ENCODE measurements at regions of chr6 and their contacts with region 1.

Region 1: GRCh38 chr6:5712349-5713215 is 294.1 kb downstream of the NRN1 start:
- DNase-seq: no peak
- ATAC-seq: no peak
- H3K4me3 ChIP-seq: no peak overlapping the region
- H3K27ac ChIP-seq: no peak overlapping the region
- H3K4me1 ChIP-seq: peaks cover 0 to 2% of the 10 kb centered on the region in 2 experiments; a peak in 1 of 5 replicates
- H3K27me3 ChIP-seq: 0 out of 5 replicates have a peak, but pooled peaks cover 0 to 4% of the 10 kb centered on the region in 2 experiments
- CTCF ChIP-seq: no peak
- EP300 ChIP-seq: no peak
- POLR2A ChIP-seq: no peak
- RAD21 ChIP-seq: no peak

Region 2: DNA sequence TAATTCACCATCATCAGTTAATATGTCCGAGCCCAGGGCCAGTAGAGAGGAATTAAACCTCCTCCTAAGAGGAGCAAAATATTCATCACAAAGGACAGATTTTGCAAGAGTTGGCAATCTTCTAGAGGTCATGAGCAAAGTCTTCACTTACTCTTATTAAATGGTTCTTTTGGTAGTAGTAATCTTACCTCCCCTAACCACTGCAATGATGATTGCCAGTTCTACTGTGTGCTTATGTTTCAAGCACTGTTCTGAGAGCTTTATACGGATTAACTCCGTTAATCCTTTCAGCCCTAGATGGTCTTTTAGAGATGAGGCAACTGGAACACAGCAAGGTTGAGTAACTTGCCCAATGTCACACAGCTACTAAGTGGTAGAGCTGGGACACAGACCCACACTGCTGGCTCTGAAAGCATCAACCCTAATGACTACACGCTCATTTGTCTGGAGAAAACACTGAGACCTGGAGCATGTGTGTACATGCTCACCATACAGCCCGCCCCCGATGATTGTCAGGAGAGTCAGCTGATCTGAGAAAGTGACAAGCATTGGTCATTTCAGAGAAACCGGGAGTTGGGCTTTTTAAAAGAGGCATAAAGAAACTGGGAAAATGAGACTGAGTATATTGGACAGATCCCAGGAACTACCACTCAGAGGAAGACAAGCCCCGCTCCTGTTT is 18.1 kb after region 1 on chr6:
- CTCF ChIA-PET with region 1: no interaction called
- POLR2A ChIA-PET with region 1: interaction called, 3 read pairs
- in situ Hi-C with region 1: no loop called
- intact Hi-C with region 1: loop called (anchors 1 kb)
- DNase-seq: no peak
- ATAC-seq: 0 out of 3 replicates have a peak, but pooled peaks have one; percentile 45
- H3K4me3 ChIP-seq: no peak overlapping the region
- H3K27ac ChIP-seq: no peak overlapping the region
- H3K4me1 ChIP-seq: no peaks in the 10 kb centered on the region
- H3K27me3 ChIP-seq: peaks cover 12 to 50% of the 10 kb centered on the region in 2 experiments
- CTCF ChIP-seq: no peak
- EP300 ChIP-seq: no peak
- POLR2A ChIP-seq: no peak
- RAD21 ChIP-seq: no peak

Region 3: DNA sequence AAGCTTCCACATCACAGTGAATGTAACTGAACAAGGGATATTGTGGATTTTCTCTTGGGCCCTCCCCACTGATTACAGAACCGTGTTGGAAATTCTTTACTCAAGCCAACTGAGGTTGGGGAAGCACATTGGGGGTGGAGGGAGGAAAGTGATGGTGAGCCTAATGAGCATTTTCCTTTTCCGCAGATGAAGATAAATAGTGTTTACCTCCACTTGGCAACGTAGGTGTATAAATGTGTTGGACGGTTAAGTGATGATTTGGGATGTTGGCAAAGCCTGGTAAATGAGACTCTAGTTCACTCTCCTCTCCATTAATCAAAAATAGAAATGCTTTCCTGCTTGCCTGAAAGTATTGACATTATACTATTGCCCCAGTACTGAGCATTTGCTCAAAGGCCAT is 321.3 kb after region 1 on chr6:
- CTCF ChIA-PET with region 1: no interaction called
- POLR2A ChIA-PET with region 1: no interaction called
- in situ Hi-C with region 1: no loop called
- intact Hi-C with region 1: no loop called
- DNase-seq: no peak
- ATAC-seq: no peak
- H3K4me3 ChIP-seq: no peak overlapping the region
- H3K27ac ChIP-seq: no peak overlapping the region
- H3K4me1 ChIP-seq: no peaks in the 10 kb centered on the region
- H3K27me3 ChIP-seq: peaks cover 0 to 5% of the 10 kb centered on the region in 2 experiments; a peak in 1 of 5 replicates
- CTCF ChIP-seq: no peak
- EP300 ChIP-seq: no peak
- POLR2A ChIP-seq: no peak
- RAD21 ChIP-seq: no peak